Naive thymus-derived CD4-positive, alpha-beta T cell (primary cell): ENCODE measurements at regions of chr22 and their contacts with region 1.

Region 1: GRCh38 chr22:46035742-46036557 is 59.0 kb upstream of the WNT7B start:
- DNase-seq: peak; percentile 99 to 100 (median 100)
- ATAC-seq: peak; percentile 95
- H3K4me3 ChIP-seq: peak overlapping the region; percentile 91
- H3K4me3 Mint-ChIP-seq: peak overlapping the region; percentile 80 to 92 (median 86)
- H3K27ac ChIP-seq: peak overlapping the region; percentile 98
- H3K27ac Mint-ChIP-seq: peak overlapping the region; percentile 87 to 97 (median 95)
- H3K4me1 ChIP-seq: peaks cover 17 to 18% of the 10 kb centered on the region in 2 donors
- H3K4me1 Mint-ChIP-seq: peaks cover 5 to 31% (median 21%) of the 10 kb centered on the region in 7 donors
- H3K27me3 ChIP-seq: no peaks in the 10 kb centered on the region
- H3K27me3 Mint-ChIP-seq: no peaks in the 10 kb centered on the region

Region 2: GRCh38 chr22:45163451-45164269 is 872.3 kb before region 1 on chr22 and contains the start of gene NUP50:
- CTCF ChIA-PET with region 1: no interaction called
- POLR2A ChIA-PET with region 1: interaction called, 5 read pairs
- intact Hi-C with region 1: loop called in 1 of 2 experiments (anchors 2 kb)
- DNase-seq: peak; percentile 93 to 98 (median 97)
- ATAC-seq: peak; percentile 89
- H3K4me3 ChIP-seq: peak within 1 kb of the TSS; percentile 81
- H3K4me3 Mint-ChIP-seq: peak within 1 kb of the TSS; percentile 85 to 100 (median 96)
- H3K27ac ChIP-seq: peak within 1 kb of the TSS; percentile 77
- H3K27ac Mint-ChIP-seq: peak within 1 kb of the TSS; percentile 88 to 97 (median 96)
- H3K4me1 ChIP-seq: peaks cover 26 to 30% of the 10 kb centered on the region in 2 donors
- H3K4me1 Mint-ChIP-seq: peaks cover 37 to 72% (median 63%) of the 10 kb centered on the region in 7 donors
- H3K27me3 ChIP-seq: no peaks in the 10 kb centered on the region
- H3K27me3 Mint-ChIP-seq: no peaks in the 10 kb centered on the region
- total RNA-seq, gene NUP50: 107 to 151 (median 130) TPM

Region 3: GRCh38 chr22:45671768-45672563 is 364.0 kb before region 1 on chr22 and contains the start of gene ATXN10:
- CTCF ChIA-PET with region 1: no interaction called
- POLR2A ChIA-PET with region 1: interaction called, 3 read pairs
- intact Hi-C with region 1: loop called in 1 of 2 experiments (anchors 1 kb)
- DNase-seq: peak; percentile 55 to 79 (median 74)
- ATAC-seq: peak; percentile 90
- H3K4me3 ChIP-seq: peak within 1 kb of the TSS; percentile 49
- H3K4me3 Mint-ChIP-seq: peak within 1 kb of the TSS; percentile 86 to 95 (median 90)
- H3K27ac ChIP-seq: peak within 1 kb of the TSS; percentile 75
- H3K27ac Mint-ChIP-seq: peak within 1 kb of the TSS; percentile 38 to 92 (median 88)
- H3K4me1 ChIP-seq: peaks cover 13 to 25% of the 10 kb centered on the region in 2 donors
- H3K4me1 Mint-ChIP-seq: peaks cover 23 to 43% (median 41%) of the 10 kb centered on the region in 7 donors
- H3K27me3 ChIP-seq: no peaks in the 10 kb centered on the region
- H3K27me3 Mint-ChIP-seq: peaks cover 4 to 10% (median 6%) of the 10 kb centered on the region in 5 donors
- total RNA-seq, gene ATXN10: 64.2 to 85.7 (median 73.1) TPM

Region 4: DNA sequence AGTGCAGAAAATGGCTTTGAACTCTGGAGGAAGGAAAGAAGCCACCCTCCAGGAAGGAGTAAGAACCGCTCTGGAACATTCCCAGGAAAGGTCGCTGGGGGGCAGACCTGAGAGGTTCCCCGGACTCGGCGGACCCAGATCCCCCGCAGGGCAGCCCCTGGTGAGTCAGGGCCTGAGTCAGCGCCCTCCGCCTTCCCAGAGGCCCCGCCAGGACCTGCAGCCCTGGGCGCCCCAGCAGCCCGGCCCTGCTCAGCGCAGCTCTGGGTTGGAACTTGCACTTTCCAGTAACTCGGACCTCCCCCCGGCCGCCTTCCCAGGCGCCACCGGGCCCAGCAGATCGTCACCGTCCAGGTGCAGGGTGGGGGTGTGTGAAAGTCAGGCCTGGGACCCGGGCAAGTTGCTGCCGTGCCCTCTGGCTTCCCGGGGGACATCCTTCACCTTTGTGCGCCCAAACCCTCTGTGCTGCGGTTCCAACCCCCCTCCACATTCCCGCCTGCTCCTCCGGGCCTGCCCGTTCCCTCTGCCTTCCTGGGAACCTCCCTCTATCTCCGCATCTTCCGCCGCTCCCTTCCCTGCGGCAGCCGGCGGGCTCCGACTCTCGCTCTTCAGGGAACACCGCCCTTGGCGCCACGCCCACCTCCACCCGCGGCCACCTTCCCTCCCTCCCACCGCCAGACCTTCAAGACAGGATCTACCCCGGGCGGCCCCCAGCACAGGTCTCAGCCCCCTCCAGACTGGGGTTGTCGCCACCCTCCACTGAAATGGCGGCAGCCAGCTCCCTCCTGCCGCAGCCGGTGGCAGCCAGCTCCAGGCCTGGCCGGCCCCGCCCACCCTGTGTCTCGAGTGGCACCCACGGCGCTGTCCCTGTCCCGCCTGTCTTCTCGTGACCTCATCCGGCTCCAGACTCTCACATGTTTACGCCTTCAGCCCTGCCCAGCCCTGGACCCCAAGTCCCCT is 22.2 kb before region 1 on chr22:
- CTCF ChIA-PET with region 1: interaction called, 76 read pairs
- POLR2A ChIA-PET with region 1: interaction called, 60 read pairs
- intact Hi-C with region 1: loop called (anchors 1 kb)
- DNase-seq: peak; percentile 53 to 88 (median 66)
- ATAC-seq: peak; percentile 91
- H3K4me3 ChIP-seq: peak overlapping the region; percentile 78
- H3K4me3 Mint-ChIP-seq: peak overlapping the region; percentile 83 to 91 (median 89)
- H3K27ac ChIP-seq: peak overlapping the region; percentile 80
- H3K27ac Mint-ChIP-seq: peak overlapping the region; percentile 79 to 94 (median 87)
- H3K4me1 ChIP-seq: peaks cover 3 to 5% of the 10 kb centered on the region in 2 donors
- H3K4me1 Mint-ChIP-seq: peaks cover 0 to 13% (median 4%) of the 10 kb centered on the region in 7 donors
- H3K27me3 ChIP-seq: no peaks in the 10 kb centered on the region
- H3K27me3 Mint-ChIP-seq: peaks cover 0 to 5% (median 0%) of the 10 kb centered on the region in 5 donors

Region 5: DNA sequence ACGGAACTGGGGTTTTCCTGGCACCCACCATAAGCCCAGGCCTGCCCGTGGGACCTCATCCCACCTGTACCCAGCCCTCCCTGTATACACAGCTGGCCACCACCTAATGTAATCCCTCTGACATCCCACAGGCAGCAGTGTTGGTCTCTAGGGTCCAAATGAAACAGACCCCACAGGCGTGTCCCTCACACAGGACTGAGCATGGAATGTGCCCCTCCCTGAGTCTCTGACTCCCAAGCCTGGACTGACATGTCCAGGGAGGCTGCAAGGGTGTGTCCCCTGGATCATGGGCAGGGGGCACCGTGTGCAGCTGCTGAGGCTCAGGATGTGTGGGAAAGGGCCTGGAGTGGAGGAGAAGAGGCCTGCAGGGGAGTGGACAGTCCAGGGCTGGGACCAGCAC is 63.8 kb after region 1 on chr22:
- CTCF ChIA-PET with region 1: no interaction called
- POLR2A ChIA-PET with region 1: no interaction called
- intact Hi-C with region 1: no loop called
- DNase-seq: no peak
- ATAC-seq: no peak
- H3K4me3 ChIP-seq: no peak overlapping the region
- H3K4me3 Mint-ChIP-seq: no peak overlapping the region
- H3K27ac ChIP-seq: no peak overlapping the region
- H3K27ac Mint-ChIP-seq: no peak overlapping the region
- H3K4me1 ChIP-seq: no peaks in the 10 kb centered on the region
- H3K4me1 Mint-ChIP-seq: peaks cover 0 to 3% (median 0%) of the 10 kb centered on the region in 7 donors
- H3K27me3 ChIP-seq: no peaks in the 10 kb centered on the region
- H3K27me3 Mint-ChIP-seq: no peaks in the 10 kb centered on the region

Region 6: GRCh38 chr22:46116491-46116958 is 80.6 kb after region 1 on chr22:
- CTCF ChIA-PET with region 1: interaction called, 11 read pairs
- POLR2A ChIA-PET with region 1: interaction called, 4 read pairs
- intact Hi-C with region 1: loop called in 1 of 2 experiments (anchors 1 kb)
- DNase-seq: peak; percentile 58 to 87 (median 80)
- ATAC-seq: peak; percentile 98
- H3K4me3 ChIP-seq: no peak overlapping the region
- H3K4me3 Mint-ChIP-seq: no peak overlapping the region
- H3K27ac ChIP-seq: no peak overlapping the region
- H3K27ac Mint-ChIP-seq: no peak overlapping the region
- H3K4me1 ChIP-seq: peaks cover 0 to 4% of the 10 kb centered on the region in 2 donors
- H3K4me1 Mint-ChIP-seq: peaks cover 0 to 6% (median 0%) of the 10 kb centered on the region in 7 donors
- H3K27me3 ChIP-seq: no peaks in the 10 kb centered on the region
- H3K27me3 Mint-ChIP-seq: no peaks in the 10 kb centered on the region

Region 7: GRCh38 chr22:46296257-46297150 is 260.6 kb after region 1 on chr22 and contains the start of gene GTSE1:
- CTCF ChIA-PET with region 1: no interaction called
- POLR2A ChIA-PET with region 1: no interaction called
- intact Hi-C with region 1: loop called in 1 of 2 experiments (anchors 1 kb)
- DNase-seq: peak; percentile 90 to 97 (median 96)
- ATAC-seq: peak; percentile 99
- H3K4me3 ChIP-seq: peak within 1 kb of the TSS; percentile 72
- H3K4me3 Mint-ChIP-seq: peak within 1 kb of the TSS; percentile 87 to 97 (median 91)
- H3K27ac ChIP-seq: peak within 1 kb of the TSS; percentile 77
- H3K27ac Mint-ChIP-seq: peak within 1 kb of the TSS; percentile 91 to 99 (median 97)
- H3K4me1 ChIP-seq: peaks cover 8 to 15% of the 10 kb centered on the region in 2 donors
- H3K4me1 Mint-ChIP-seq: peaks cover 14 to 60% (median 27%) of the 10 kb centered on the region in 7 donors
- H3K27me3 ChIP-seq: no peaks in the 10 kb centered on the region
- H3K27me3 Mint-ChIP-seq: peaks cover 0 to 11% (median 9%) of the 10 kb centered on the region in 5 donors
- total RNA-seq, gene GTSE1: 0.30 to 55.5 (median 0.61) TPM in 3 of 5 experiments, not detected in the others